CD4-positive, alpha-beta T cell (primary cell): ENCODE measurements at regions of chr10 and their contacts with region 1.

Region 1: GRCh38 chr10:8331883-8332729 is 277.6 kb downstream of the GATA3 start:
- DNase-seq: peak; percentile 80 to 98 (median 88)
- ATAC-seq: peak; percentile 90
- H3K4me3 ChIP-seq: peak overlapping the region; percentile 61
- H3K4me3 Mint-ChIP-seq: peak overlapping the region; percentile 68
- H3K27ac ChIP-seq: peak overlapping the region; percentile 84 to 89
- H3K27ac Mint-ChIP-seq: peak overlapping the region; percentile 86
- H3K4me1 ChIP-seq: peaks cover 23% of the 10 kb centered on the region
- H3K4me1 Mint-ChIP-seq: peaks cover 44% of the 10 kb centered on the region
- H3K27me3 ChIP-seq: no peaks in the 10 kb centered on the region
- H3K27me3 Mint-ChIP-seq: no peaks in the 10 kb centered on the region
- CTCF ChIP-seq: no peak

Region 2: GRCh38 chr10:8138471-8138870 is 193.6 kb before region 1 on chr10:
- CTCF ChIA-PET with region 1: no interaction called
- POLR2A ChIA-PET with region 1: interaction called, 13 read pairs
- intact Hi-C with region 1: no loop called
- DNase-seq: no peak
- ATAC-seq: no peak
- H3K4me3 ChIP-seq: no peak overlapping the region
- H3K4me3 Mint-ChIP-seq: peak overlapping the region; percentile 88
- H3K27ac ChIP-seq: no peak overlapping the region
- H3K27ac Mint-ChIP-seq: peak overlapping the region; percentile 90
- H3K4me1 ChIP-seq: peaks cover 23% of the 10 kb centered on the region
- H3K4me1 Mint-ChIP-seq: peaks cover 30% of the 10 kb centered on the region
- H3K27me3 ChIP-seq: no peaks in the 10 kb centered on the region
- H3K27me3 Mint-ChIP-seq: no peaks in the 10 kb centered on the region
- CTCF ChIP-seq: no peak

Region 3: GRCh38 chr10:8245131-8245813 is 86.8 kb before region 1 on chr10:
- CTCF ChIA-PET with region 1: no interaction called
- POLR2A ChIA-PET with region 1: interaction called, 18 read pairs
- intact Hi-C with region 1: loop called (anchors 5 to 10 kb)
- DNase-seq: peak in 4 of 14 experiments; percentile 37 to 81 (median 69)
- ATAC-seq: peak; percentile 90
- H3K4me3 ChIP-seq: peak overlapping the region; percentile 1
- H3K4me3 Mint-ChIP-seq: peak overlapping the region; percentile 79
- H3K27ac ChIP-seq: peak overlapping the region; percentile 32 to 72
- H3K27ac Mint-ChIP-seq: peak overlapping the region; percentile 92
- H3K4me1 ChIP-seq: peaks cover 44% of the 10 kb centered on the region
- H3K4me1 Mint-ChIP-seq: peaks cover 77% of the 10 kb centered on the region
- H3K27me3 ChIP-seq: no peaks in the 10 kb centered on the region
- H3K27me3 Mint-ChIP-seq: no peaks in the 10 kb centered on the region
- CTCF ChIP-seq: no peak

Region 4: DNA sequence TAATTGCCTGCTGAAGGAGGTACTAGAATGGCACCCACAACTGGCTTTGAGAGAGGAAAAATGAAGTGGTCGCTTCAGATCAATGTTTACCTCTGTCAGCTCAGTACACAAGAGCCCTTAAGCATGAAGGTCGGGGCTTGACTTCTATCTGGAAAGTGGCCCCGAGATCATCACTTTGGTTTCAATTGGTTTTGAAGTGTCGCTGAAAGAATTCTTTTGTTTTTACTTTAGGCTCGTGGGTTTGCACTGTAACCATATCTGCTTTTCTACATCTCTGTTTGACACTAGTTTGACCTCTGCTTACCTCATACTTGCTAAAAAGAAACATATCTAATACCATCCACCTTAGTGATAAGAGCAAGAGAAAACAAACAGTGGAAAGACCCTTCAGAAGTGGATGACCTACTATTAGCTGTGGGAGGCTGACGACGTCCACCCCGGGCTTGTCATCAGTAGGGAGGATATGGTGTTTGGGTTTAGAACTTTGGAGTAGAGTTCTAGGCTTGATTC is 84.1 kb after region 1 on chr10:
- CTCF ChIA-PET with region 1: interaction called, 10 read pairs
- POLR2A ChIA-PET with region 1: interaction called, 14 read pairs
- intact Hi-C with region 1: no loop called
- DNase-seq: peak in 8 of 14 experiments; percentile 10 to 86 (median 30)
- ATAC-seq: peak; percentile 85
- H3K4me3 ChIP-seq: no peak overlapping the region
- H3K4me3 Mint-ChIP-seq: no peak overlapping the region
- H3K27ac ChIP-seq: peak overlapping the region; percentile 32 to 88
- H3K27ac Mint-ChIP-seq: peak overlapping the region; percentile 90
- H3K4me1 ChIP-seq: peaks cover 20% of the 10 kb centered on the region
- H3K4me1 Mint-ChIP-seq: peaks cover 30% of the 10 kb centered on the region
- H3K27me3 ChIP-seq: no peaks in the 10 kb centered on the region
- H3K27me3 Mint-ChIP-seq: no peaks in the 10 kb centered on the region
- CTCF ChIP-seq: no peak

Region 5: GRCh38 chr10:8473205-8473604 is 141.1 kb after region 1 on chr10:
- CTCF ChIA-PET with region 1: no interaction called
- POLR2A ChIA-PET with region 1: interaction called, 3 read pairs
- intact Hi-C with region 1: loop called in 1 of 2 experiments (anchors 5 kb)
- DNase-seq: peak in 5 of 14 experiments; percentile 17 to 78 (median 68)
- ATAC-seq: peak; percentile 83
- H3K4me3 ChIP-seq: no peak overlapping the region
- H3K4me3 Mint-ChIP-seq: no peak overlapping the region
- H3K27ac ChIP-seq: no peak overlapping the region
- H3K27ac Mint-ChIP-seq: no peak overlapping the region
- H3K4me1 ChIP-seq: no peaks in the 10 kb centered on the region
- H3K4me1 Mint-ChIP-seq: no peaks in the 10 kb centered on the region
- H3K27me3 ChIP-seq: no peaks in the 10 kb centered on the region
- H3K27me3 Mint-ChIP-seq: peaks cover 28% of the 10 kb centered on the region
- CTCF ChIP-seq: peak; percentile 43